IMR-90 (cell line): ENCODE measurements at regions of chr7 and their contacts with region 1.

Region 1: DNA sequence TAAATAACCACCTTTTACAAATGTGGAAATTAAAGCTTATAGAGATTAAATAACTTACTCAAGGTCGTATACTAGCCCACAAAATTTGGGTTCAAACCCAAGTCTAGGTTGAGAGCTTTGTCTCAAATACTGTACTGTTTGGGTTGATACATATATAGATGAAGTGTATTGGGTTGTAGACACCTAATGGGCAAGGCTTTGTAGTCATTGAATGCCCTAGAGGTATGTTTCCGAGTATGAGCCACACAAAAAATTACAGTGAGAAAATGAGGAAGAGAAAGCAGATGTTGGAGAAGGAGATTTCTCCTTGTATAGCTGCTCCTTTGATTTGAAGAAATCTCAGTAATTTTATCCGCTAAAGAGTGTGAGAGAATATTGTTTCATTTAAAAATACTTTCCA is 60.6 kb downstream of the C1GALT1 start:
- DNase-seq: no peak
- ATAC-seq: no peak
- H3K4me3 ChIP-seq: no peak overlapping the region
- H3K27ac ChIP-seq: no peak overlapping the region
- H3K4me1 ChIP-seq: no peaks in the 10 kb centered on the region
- H3K27me3 ChIP-seq: no peaks in the 10 kb centered on the region
- CTCF ChIP-seq: no peak
- POLR2A ChIP-seq: no peak
- RAD21 ChIP-seq: no peak

Region 2: GRCh38 chr7:7228472-7228871 is 14.4 kb before region 1 on chr7:
- CTCF ChIA-PET with region 1: no interaction called
- POLR2A ChIA-PET with region 1: no interaction called
- dilution Hi-C with region 1: no loop called
- in situ Hi-C with region 1: no loop called
- intact Hi-C with region 1: loop called (anchors 2 kb)
- DNase-seq: peak; percentile 41
- ATAC-seq: peak; percentile 88
- H3K4me3 ChIP-seq: no peak overlapping the region
- H3K27ac ChIP-seq: no peak overlapping the region
- H3K4me1 ChIP-seq: peaks cover 4% of the 10 kb centered on the region
- H3K27me3 ChIP-seq: no peaks in the 10 kb centered on the region
- CTCF ChIP-seq: no peak
- POLR2A ChIP-seq: no peak
- RAD21 ChIP-seq: no peak